PC-9 (cell line): ENCODE measurements at regions of chr12 and their contacts with region 1.

Region 1: DNA sequence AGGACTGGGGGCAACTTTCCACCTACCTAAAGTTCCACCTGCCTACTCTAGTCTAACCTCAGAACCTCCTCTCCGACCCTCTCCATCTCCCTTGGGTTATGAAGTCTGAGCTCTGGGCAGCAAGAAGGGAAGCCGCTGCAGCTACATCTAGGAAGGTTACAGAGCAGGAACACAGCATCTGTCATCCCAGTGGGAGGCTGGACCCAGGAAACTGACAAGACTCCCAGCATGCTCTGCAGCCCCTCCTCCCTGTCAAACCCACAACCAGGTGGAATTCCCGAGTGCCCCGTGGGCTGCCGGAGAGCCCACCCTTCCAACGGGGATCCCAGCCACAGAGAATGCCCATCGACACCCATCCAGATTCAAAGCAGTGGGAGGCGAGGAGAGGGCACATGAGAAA is 2.1 kb downstream of the TESC start:
- DNase-seq: no peak
- H3K4me3 ChIP-seq: no peak overlapping the region
- H3K27ac ChIP-seq: no peak overlapping the region
- H3K4me1 ChIP-seq: no peaks in the 10 kb centered on the region
- H3K27me3 ChIP-seq: peaks cover 94% of the 10 kb centered on the region
- CTCF ChIP-seq: no peak

Region 2: DNA sequence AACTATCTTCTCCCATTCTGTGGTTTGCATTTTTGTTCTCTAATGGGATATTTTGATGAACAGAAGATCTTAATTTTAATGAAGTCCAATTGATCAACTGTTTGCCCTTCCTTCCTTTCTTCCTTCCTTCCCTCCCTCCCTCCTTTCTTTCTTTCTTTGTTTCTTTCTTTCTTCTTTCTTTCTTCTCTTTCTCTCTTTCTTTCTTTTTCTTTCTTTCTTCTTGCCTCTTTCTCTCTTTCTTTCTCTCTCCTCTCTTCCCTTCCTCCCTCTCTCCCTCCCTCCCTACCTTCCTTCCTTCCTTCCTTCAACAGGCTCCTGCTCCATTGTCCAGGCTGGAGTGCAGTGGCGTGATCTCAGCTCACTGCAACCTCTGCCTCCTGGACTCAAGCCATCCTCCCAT is 519.1 kb before region 1 on chr12:
- CTCF ChIA-PET with region 1: no interaction called
- POLR2A ChIA-PET with region 1: interaction called, 10 read pairs
- intact Hi-C with region 1: no loop called
- DNase-seq: no peak
- H3K4me3 ChIP-seq: no peak overlapping the region
- H3K27ac ChIP-seq: no peak overlapping the region
- H3K4me1 ChIP-seq: no peaks in the 10 kb centered on the region
- H3K27me3 ChIP-seq: no peaks in the 10 kb centered on the region
- CTCF ChIP-seq: no peak

Region 3: DNA sequence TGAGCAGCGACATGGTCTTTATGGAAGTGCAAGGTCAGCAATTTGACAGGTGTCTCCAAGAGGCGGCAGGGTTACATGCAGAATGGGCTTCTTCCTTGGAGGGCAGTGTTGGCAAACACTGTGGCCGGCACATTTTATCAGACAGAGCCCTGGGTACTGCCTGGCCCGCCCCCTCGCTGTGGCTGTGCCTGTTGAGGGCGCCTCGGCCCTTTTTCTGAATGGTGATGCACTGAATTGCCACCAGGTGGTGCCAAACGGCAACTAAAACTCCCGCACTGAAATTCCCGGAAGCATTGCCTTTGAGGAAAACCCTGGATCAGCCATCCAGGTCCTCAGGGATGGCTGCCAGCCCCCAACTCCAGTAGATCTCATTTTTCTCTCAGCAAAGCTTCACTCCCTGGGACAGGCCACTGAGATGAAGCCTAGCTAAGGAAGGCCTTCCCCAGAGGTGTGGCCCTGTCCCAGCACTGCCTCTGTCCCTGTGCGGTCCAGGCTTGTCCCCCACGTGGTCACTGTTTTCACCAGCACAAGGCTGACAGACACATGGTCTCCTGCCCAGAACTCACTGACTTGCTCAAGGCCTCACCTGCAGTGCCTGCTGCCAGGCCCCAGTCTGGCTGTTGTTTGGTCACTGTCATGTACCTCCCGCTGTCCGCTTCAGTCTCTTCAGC is 71.5 kb before region 1 on chr12:
- CTCF ChIA-PET with region 1: no interaction called
- POLR2A ChIA-PET with region 1: no interaction called
- intact Hi-C with region 1: no loop called
- DNase-seq: peak; percentile 51 to 61
- H3K4me3 ChIP-seq: no peak overlapping the region
- H3K27ac ChIP-seq: no peak overlapping the region
- H3K4me1 ChIP-seq: no peaks in the 10 kb centered on the region
- H3K27me3 ChIP-seq: no peaks in the 10 kb centered on the region
- CTCF ChIP-seq: peak; percentile 88

Region 4: GRCh38 chr12:117060246-117060928 is 36.8 kb before region 1 on chr12:
- CTCF ChIA-PET with region 1: no interaction called
- POLR2A ChIA-PET with region 1: no interaction called
- intact Hi-C with region 1: no loop called
- DNase-seq: peak in 1 of 2 experiments; percentile 33
- H3K4me3 ChIP-seq: no peak overlapping the region
- H3K27ac ChIP-seq: no peak overlapping the region
- H3K4me1 ChIP-seq: no peaks in the 10 kb centered on the region
- H3K27me3 ChIP-seq: peaks cover 34% of the 10 kb centered on the region; the same call in 1 of the 2 replicates
- CTCF ChIP-seq: no peak